Activated B cell treated with CpG ODN at 0.5 μM for 24 hours (primary cell): ENCODE measurements at regions of chr10 and their contacts with region 1.

Region 1: DNA sequence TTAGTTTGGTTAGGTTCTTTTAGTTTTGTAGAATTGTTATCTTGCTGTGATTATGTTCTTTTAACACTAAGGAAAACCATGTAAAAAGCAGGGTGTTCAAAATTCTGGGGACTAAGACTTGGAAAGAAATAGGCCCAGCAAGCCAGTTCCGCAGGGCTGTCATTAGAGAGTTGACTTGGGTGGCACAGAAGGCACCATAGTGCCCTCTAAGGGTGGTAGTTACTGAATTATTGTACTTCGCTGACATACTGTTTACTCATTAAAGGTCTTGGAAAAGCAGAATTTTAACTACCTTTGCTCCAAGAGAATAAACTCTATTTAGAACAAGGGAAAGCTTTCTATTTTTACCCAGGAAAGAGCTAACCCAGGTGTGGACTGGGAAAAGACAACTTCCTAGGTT is 86.5 kb downstream of the OTUD1 start:
- DNase-seq: no peak
- ATAC-seq: peak; percentile 75
- H3K4me3 Mint-ChIP-seq: no peak overlapping the region
- H3K27ac Mint-ChIP-seq: no peak overlapping the region
- H3K4me1 Mint-ChIP-seq: peaks cover 31% of the 10 kb centered on the region
- H3K27me3 Mint-ChIP-seq: no peaks in the 10 kb centered on the region
- CTCF ChIP-seq: no peak

Region 2: GRCh38 chr10:22837351-22837750 is 688.1 kb before region 1 on chr10:
- CTCF ChIA-PET with region 1: no interaction called
- POLR2A ChIA-PET with region 1: no interaction called
- intact Hi-C with region 1: no loop called
- DNase-seq: no peak
- ATAC-seq: no peak
- H3K4me3 Mint-ChIP-seq: no peak overlapping the region
- H3K27ac Mint-ChIP-seq: no peak overlapping the region
- H3K4me1 Mint-ChIP-seq: peaks cover 4% of the 10 kb centered on the region
- H3K27me3 Mint-ChIP-seq: no peaks in the 10 kb centered on the region
- CTCF ChIP-seq: no peak

Region 3: DNA sequence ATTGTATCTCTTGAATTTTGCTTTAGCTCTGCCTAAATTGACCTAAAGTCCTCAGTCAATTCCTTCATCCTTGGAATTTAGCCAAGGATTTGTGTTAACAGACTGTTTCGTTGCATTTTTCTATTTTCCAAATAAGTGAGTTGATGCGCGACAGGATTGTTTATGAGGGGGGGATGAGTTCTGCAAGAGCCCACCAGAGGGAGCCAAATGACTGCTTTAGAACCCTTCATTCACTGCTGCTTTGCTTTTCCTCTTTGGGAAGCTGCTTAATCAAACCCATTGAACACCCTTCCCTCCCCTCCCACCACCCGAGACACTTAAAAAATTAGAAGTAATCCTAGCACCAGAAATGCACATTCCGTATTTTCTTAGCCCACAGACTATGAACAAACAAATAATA is 367.0 kb before region 1 on chr10:
- CTCF ChIA-PET with region 1: interaction called, 6 read pairs
- POLR2A ChIA-PET with region 1: no interaction called
- intact Hi-C with region 1: loop called (anchors 1 kb)
- DNase-seq: no peak
- ATAC-seq: peak; percentile 66
- H3K4me3 Mint-ChIP-seq: no peak overlapping the region
- H3K27ac Mint-ChIP-seq: no peak overlapping the region
- H3K4me1 Mint-ChIP-seq: peaks cover 3% of the 10 kb centered on the region
- H3K27me3 Mint-ChIP-seq: peaks cover 21% of the 10 kb centered on the region
- CTCF ChIP-seq: peak; percentile 92

Region 4: DNA sequence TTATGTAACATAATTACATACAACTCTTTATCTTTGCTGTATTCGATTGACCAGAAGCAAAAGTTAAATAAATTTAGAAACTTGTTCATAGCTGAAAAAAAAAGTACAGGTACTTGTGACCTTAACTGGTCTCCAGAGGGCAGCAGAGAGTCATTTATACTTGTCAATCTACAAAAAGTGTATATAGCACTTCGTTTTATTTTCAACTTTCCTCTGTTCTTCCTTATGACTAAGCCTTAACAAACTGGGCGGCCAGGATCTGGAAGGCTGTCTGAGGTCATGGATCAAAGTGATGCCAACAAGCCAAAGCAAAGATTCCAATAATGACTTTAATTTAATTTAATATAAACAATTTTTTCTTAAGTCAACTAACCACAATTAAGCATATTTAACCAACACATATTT is 210.6 kb before region 1 on chr10:
- CTCF ChIA-PET with region 1: interaction called, 275 read pairs
- POLR2A ChIA-PET with region 1: no interaction called
- intact Hi-C with region 1: loop called (anchors 1 kb)
- DNase-seq: no peak
- ATAC-seq: peak; percentile 25
- H3K4me3 Mint-ChIP-seq: no peak overlapping the region
- H3K27ac Mint-ChIP-seq: no peak overlapping the region
- H3K4me1 Mint-ChIP-seq: peaks cover 4% of the 10 kb centered on the region
- H3K27me3 Mint-ChIP-seq: peaks cover 3% of the 10 kb centered on the region
- CTCF ChIP-seq: peak; percentile 77

Region 5: GRCh38 chr10:23702977-23703414 is 177.6 kb after region 1 on chr10:
- CTCF ChIA-PET with region 1: no interaction called
- POLR2A ChIA-PET with region 1: no interaction called
- intact Hi-C with region 1: loop called (anchors 2 kb)
- DNase-seq: no peak
- ATAC-seq: peak; percentile 52
- H3K4me3 Mint-ChIP-seq: no peak overlapping the region
- H3K27ac Mint-ChIP-seq: no peak overlapping the region
- H3K4me1 Mint-ChIP-seq: peaks cover 2% of the 10 kb centered on the region
- H3K27me3 Mint-ChIP-seq: peaks cover 13% of the 10 kb centered on the region
- CTCF ChIP-seq: peak; percentile 28

Region 6: GRCh38 chr10:24197263-24197662 is 671.9 kb after region 1 on chr10:
- CTCF ChIA-PET with region 1: no interaction called
- POLR2A ChIA-PET with region 1: no interaction called
- intact Hi-C with region 1: loop called (anchors 5 kb)
- DNase-seq: no peak
- ATAC-seq: no peak
- H3K4me3 Mint-ChIP-seq: no peak overlapping the region
- H3K27ac Mint-ChIP-seq: no peak overlapping the region
- H3K4me1 Mint-ChIP-seq: no peaks in the 10 kb centered on the region
- H3K27me3 Mint-ChIP-seq: peaks cover 4% of the 10 kb centered on the region
- CTCF ChIP-seq: no peak